ENCODE measurements at regions of chr16 and their contacts with region 1.

Region 1: DNA sequence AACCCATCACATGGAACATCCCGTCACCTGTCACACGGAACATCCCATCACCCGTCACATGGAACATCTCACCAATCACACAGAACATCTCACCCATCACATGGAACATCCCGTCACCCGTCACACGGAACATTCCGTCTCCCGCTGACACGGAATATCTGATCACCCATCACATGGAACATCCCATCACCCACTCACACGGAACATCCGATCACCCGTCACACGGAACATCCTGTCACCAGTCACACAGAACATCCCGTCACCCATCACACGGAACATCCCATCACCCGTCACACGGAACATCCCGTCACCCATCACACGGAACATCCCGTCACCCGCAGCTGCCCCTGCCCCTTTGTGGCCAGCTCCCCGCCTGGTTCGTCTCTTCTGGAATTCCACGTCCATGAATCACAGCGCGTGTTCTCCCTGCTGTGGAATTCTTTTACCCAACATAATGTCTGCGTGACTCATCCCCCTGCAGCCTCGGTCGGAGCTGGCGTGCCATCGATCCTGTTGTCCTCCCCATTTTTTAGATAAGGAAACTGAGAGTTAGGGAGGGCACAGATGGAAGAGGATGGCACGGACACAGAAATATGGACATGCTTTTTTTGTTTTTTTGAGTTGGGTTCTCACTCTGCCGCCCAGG is 5.6 kb downstream of the CPNE7 start:
- DNase-seq: peak; percentile 77
- H3K4me3 Mint-ChIP-seq: no peak overlapping the region
- H3K27ac Mint-ChIP-seq: no peak overlapping the region
- H3K4me1 Mint-ChIP-seq: no peaks in the 10 kb centered on the region
- H3K27me3 Mint-ChIP-seq: no peaks in the 10 kb centered on the region
- CTCF ChIP-seq: no peak

Region 2: DNA sequence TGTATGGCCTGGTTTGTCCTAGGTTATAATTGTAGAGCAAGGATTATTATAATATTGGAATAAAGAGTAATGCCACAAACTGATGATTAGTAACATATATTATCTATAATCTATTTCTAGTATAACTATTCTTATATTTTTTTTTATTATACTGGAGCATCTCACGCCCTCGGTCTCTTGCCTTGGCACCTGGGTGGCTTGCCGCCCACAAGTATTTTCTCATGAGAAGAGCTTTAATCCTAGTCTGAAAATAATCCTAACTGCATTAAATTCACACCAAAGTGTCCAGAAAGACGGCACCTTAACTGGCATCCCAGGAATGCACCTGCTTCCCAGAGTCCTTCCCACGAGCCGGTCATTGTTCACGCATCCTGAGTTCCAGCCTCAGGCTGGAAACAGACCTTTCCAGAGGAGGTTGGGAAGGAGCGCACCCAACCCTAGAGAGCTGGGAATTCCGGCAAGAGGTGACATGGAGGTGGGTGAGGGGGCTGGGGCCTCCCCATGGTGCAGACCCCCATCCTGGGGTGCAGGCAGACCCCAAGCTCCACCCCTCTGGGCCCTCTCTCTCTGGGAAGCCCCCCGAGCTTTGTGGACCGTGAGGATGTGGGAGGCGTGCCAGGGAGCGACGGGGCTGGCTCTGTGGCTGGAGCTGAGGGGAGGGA is 60.4 kb after region 1 on chr16:
- CTCF ChIA-PET with region 1: no interaction called
- intact Hi-C with region 1: loop called (anchors 5 kb)
- DNase-seq: no peak
- H3K4me3 Mint-ChIP-seq: peak overlapping the region; percentile 57
- H3K27ac Mint-ChIP-seq: no peak overlapping the region
- H3K4me1 Mint-ChIP-seq: peaks cover 12% of the 10 kb centered on the region
- H3K27me3 Mint-ChIP-seq: peaks cover 46% of the 10 kb centered on the region
- CTCF ChIP-seq: no peak

Region 3: GRCh38 chr16:89655062-89655643 is 74.0 kb after region 1 on chr16:
- CTCF ChIA-PET with region 1: interaction called, 12 read pairs
- intact Hi-C with region 1: no loop called
- DNase-seq: no peak
- H3K4me3 Mint-ChIP-seq: no peak overlapping the region
- H3K27ac Mint-ChIP-seq: no peak overlapping the region
- H3K4me1 Mint-ChIP-seq: peaks cover 20% of the 10 kb centered on the region
- H3K27me3 Mint-ChIP-seq: no peaks in the 10 kb centered on the region
- CTCF ChIP-seq: no peak

Region 4: DNA sequence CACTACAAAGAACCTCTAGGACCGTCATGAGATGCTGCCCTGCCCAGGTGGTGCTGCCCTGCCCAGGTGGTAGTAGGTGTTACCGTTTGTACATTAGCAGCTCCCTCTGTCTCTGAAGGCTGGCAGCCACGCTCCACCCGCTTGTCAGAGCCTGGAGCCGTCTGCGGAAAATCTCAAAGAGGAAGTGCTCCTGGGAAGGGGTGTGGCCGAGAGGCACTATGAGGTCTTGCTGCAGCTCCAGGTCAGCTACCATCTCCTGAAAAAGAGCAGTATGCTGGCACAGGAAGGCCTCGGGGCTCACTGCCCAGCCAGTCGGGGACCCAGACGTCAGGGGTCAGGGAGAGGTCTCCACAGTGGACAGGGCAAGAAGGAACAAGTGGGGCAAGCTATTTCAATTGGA is 168.5 kb after region 1 on chr16:
- CTCF ChIA-PET with region 1: no interaction called
- intact Hi-C with region 1: no loop called
- DNase-seq: no peak
- H3K4me3 Mint-ChIP-seq: no peak overlapping the region
- H3K27ac Mint-ChIP-seq: no peak overlapping the region
- H3K4me1 Mint-ChIP-seq: peaks cover 8% of the 10 kb centered on the region
- H3K27me3 Mint-ChIP-seq: no peaks in the 10 kb centered on the region
- CTCF ChIP-seq: no peak